ENCODE measurements at regions of chr10 and their contacts with region 1.

Region 1: GRCh38 chr10:127906548-127907377 is at the start of gene PTPRE:
- DNase-seq: peak in 1 of 2 donors; percentile 52
- H3K4me3 ChIP-seq: peak within 1 kb of the TSS; percentile 53 to 77
- H3K27ac ChIP-seq: peak within 1 kb of the TSS; percentile 44 to 63
- H3K4me1 ChIP-seq: peaks cover 0 to 24% (median 19%) of the 10 kb centered on the region in 4 donors
- H3K27me3 ChIP-seq: peaks cover 0 to 17% of the 10 kb centered on the region in 2 donors
- CTCF ChIP-seq: peak; percentile 72 to 96

Region 2: GRCh38 chr10:128011175-128011979 is 104.6 kb after region 1 on chr10:
- intact Hi-C with region 1: loop called (anchors 2 kb)
- DNase-seq: peak; percentile 77 to 86
- H3K4me3 ChIP-seq: no peak overlapping the region
- H3K27ac ChIP-seq: no peak overlapping the region
- H3K4me1 ChIP-seq: peaks cover 0 to 6% (median 3%) of the 10 kb centered on the region in 4 donors
- H3K27me3 ChIP-seq: peaks cover 0 to 10% of the 10 kb centered on the region in 2 donors
- CTCF ChIP-seq: peak; percentile 97 to 99